IMR-90 (cell line): ENCODE measurements at regions of chr10 and their contacts with region 1.

Region 1: GRCh38 chr10:83254698-83255097 is 884.6 kb upstream of the GHITM start:
- DNase-seq: no peak
- ATAC-seq: no peak
- H3K4me3 ChIP-seq: no peak overlapping the region
- H3K27ac ChIP-seq: no peak overlapping the region
- H3K4me1 ChIP-seq: no peaks in the 10 kb centered on the region
- H3K27me3 ChIP-seq: no peaks in the 10 kb centered on the region
- CTCF ChIP-seq: no peak
- POLR2A ChIP-seq: no peak
- RAD21 ChIP-seq: no peak

Region 2: GRCh38 chr10:81594991-81595390 is 1659.7 kb before region 1 on chr10:
- CTCF ChIA-PET with region 1: no interaction called
- POLR2A ChIA-PET with region 1: no interaction called
- dilution Hi-C with region 1: no loop called
- in situ Hi-C with region 1: no loop called
- intact Hi-C with region 1: loop called (anchors 5 kb)
- DNase-seq: no peak
- ATAC-seq: no peak
- H3K4me3 ChIP-seq: no peak overlapping the region
- H3K27ac ChIP-seq: no peak overlapping the region
- H3K4me1 ChIP-seq: no peaks in the 10 kb centered on the region
- H3K27me3 ChIP-seq: no peaks in the 10 kb centered on the region
- CTCF ChIP-seq: no peak
- POLR2A ChIP-seq: no peak
- RAD21 ChIP-seq: no peak

Region 3: GRCh38 chr10:83272666-83273434 is 18.2 kb after region 1 on chr10:
- CTCF ChIA-PET with region 1: no interaction called
- POLR2A ChIA-PET with region 1: no interaction called
- dilution Hi-C with region 1: no loop called
- in situ Hi-C with region 1: no loop called
- intact Hi-C with region 1: no loop called
- DNase-seq: no peak
- ATAC-seq: no peak
- H3K4me3 ChIP-seq: no peak overlapping the region
- H3K27ac ChIP-seq: no peak overlapping the region
- H3K4me1 ChIP-seq: no peaks in the 10 kb centered on the region
- H3K27me3 ChIP-seq: no peaks in the 10 kb centered on the region
- CTCF ChIP-seq: no peak
- POLR2A ChIP-seq: no peak
- RAD21 ChIP-seq: no peak

Region 4: DNA sequence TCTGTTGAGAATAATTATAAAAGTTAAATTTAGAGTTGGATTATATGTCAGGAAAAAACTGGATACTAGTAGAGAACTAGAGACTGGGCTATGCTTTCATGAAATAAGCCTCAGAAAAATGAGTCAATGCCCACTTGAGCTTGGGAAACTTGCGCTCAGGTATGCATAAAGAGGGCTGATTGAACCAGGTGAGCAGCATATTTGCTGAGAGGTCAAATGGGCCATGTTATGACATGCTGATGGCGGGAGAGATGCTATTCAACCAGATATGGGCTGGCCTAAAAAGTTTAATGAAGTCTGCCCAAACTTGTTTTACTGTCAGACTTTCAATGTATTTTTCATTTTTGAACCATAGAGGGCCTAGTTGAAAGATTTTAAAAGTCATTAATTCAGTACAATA is 47.0 kb after region 1 on chr10:
- CTCF ChIA-PET with region 1: no interaction called
- POLR2A ChIA-PET with region 1: no interaction called
- dilution Hi-C with region 1: no loop called
- in situ Hi-C with region 1: no loop called
- intact Hi-C with region 1: no loop called
- DNase-seq: no peak
- ATAC-seq: no peak
- H3K4me3 ChIP-seq: no peak overlapping the region
- H3K27ac ChIP-seq: no peak overlapping the region
- H3K4me1 ChIP-seq: no peaks in the 10 kb centered on the region
- H3K27me3 ChIP-seq: no peaks in the 10 kb centered on the region
- CTCF ChIP-seq: no peak
- POLR2A ChIP-seq: no peak
- RAD21 ChIP-seq: no peak